Transverse colon (tissue), 4 donors: ENCODE measurements at regions of chr6 and their contacts with region 1.

Region 1: GRCh38 chr6:10429638-10430427 is 15.0 kb upstream of the TFAP2A start:
- DNase-seq: no peak
- H3K4me3 ChIP-seq: no peak overlapping the region
- H3K27ac ChIP-seq: no peak overlapping the region
- H3K4me1 ChIP-seq: peaks cover 0 to 24% (median 13%) of the 10 kb centered on the region in 4 donors
- H3K27me3 ChIP-seq: peaks cover 65% of the 10 kb centered on the region
- CTCF ChIP-seq: peak; percentile 29 to 55 (median 44)
- EP300 ChIP-seq: no peak
- POLR2A ChIP-seq: no peak

Region 2: GRCh38 chr6:8983188-8983688 is 1446.6 kb before region 1 on chr6:
- in situ Hi-C with region 1: loop called (anchors 10 to 25 kb)
- intact Hi-C with region 1: no loop called
- DNase-seq: peak; percentile 63
- H3K4me3 ChIP-seq: peak overlapping the region in 1 of 4 donors; percentile 4
- H3K27ac ChIP-seq: no peak overlapping the region
- H3K4me1 ChIP-seq: peaks cover 0 to 8% (median 2%) of the 10 kb centered on the region in 4 donors
- H3K27me3 ChIP-seq: peaks cover 26% of the 10 kb centered on the region
- CTCF ChIP-seq: peak; percentile 83 to 95 (median 93)
- EP300 ChIP-seq: no peak
- POLR2A ChIP-seq: no peak

Region 3: DNA sequence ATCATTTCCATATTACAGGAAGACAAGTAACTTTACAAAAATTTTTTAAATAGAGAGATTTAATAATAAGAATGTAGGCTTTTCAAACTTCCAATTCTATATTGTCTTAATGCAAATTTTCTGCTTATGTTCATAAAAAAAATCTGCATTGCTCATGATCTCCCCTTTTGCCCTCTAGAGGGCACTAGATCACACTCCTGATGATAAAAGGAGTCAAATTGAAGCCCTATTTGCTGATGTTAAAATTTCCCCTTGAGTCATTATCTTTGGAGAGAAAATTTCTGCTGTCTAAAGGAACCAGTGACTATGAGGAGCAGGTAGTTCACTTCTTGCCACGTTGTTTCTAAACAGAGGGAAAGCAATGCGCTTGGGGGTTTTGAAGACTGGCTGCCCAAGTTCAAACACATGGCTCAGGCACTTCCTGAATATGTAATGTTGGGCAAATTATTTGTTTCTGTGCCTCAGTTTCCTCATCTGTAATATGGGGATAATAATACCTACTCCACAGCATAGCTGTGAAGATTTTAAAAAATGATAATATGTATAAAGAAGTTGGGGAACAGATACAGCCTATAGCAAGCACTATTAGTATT is 889.2 kb before region 1 on chr6:
- in situ Hi-C with region 1: loop called in 3 of 4 experiments (anchors 25 kb)
- intact Hi-C with region 1: no loop called
- DNase-seq: no peak
- H3K4me3 ChIP-seq: no peak overlapping the region
- H3K27ac ChIP-seq: no peak overlapping the region
- H3K4me1 ChIP-seq: no peaks in the 10 kb centered on the region
- H3K27me3 ChIP-seq: no peaks in the 10 kb centered on the region
- CTCF ChIP-seq: peak in 4 of 5 experiments; percentile 24 to 62 (median 50)
- EP300 ChIP-seq: no peak
- POLR2A ChIP-seq: no peak

Region 4: DNA sequence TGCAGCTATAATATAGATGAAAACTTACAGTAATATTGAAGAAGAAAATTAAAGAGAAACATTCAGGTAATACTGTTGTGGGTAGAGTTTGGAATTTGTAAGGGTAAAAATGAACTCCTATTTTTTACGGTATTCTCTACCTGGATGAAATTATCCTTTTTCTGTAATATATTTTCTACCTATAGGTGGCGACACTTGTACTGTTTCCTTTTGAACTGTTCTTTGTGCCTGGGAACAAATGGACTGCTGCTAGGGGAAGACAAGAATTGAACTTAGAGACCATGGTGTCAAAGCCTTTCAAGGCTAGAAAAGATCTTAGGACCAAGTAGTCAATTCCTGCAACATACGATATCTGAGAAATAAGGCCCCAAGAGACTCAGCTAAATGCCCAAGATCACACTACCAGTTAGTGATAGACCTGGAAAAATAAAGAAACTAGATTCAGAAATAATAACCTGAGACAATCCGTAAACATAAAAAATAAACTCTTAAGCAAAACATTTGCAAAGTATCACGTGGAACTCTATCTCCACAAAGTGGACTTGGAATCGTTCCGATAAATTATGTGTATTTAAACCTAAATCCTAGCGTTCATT is 398.8 kb before region 1 on chr6:
- in situ Hi-C with region 1: no loop called
- intact Hi-C with region 1: loop called (anchors 10 kb)
- DNase-seq: no peak
- H3K4me3 ChIP-seq: no peak overlapping the region
- H3K27ac ChIP-seq: no peak overlapping the region
- H3K4me1 ChIP-seq: no peaks in the 10 kb centered on the region
- H3K27me3 ChIP-seq: no peaks in the 10 kb centered on the region
- CTCF ChIP-seq: peak in 4 of 5 experiments; percentile 38 to 54 (median 50)
- EP300 ChIP-seq: no peak
- POLR2A ChIP-seq: no peak